Thyroid gland (tissue), 4 donors: ENCODE measurements at regions of chr10 and their contacts with region 1.

Region 1: GRCh38 chr10:116287906-116288501 is 15.0 kb upstream of the GFRA1 start:
- DNase-seq: peak; percentile 34 to 46
- H3K4me3 ChIP-seq: no peak overlapping the region
- H3K27ac ChIP-seq: no peak overlapping the region
- H3K4me1 ChIP-seq: no peaks in the 10 kb centered on the region
- H3K27me3 ChIP-seq: no peaks in the 10 kb centered on the region
- CTCF ChIP-seq: peak in 5 of 6 experiments; percentile 46 to 85 (median 69)
- POLR2A ChIP-seq: no peak

Region 2: GRCh38 chr10:115706026-115706781 is 581.8 kb before region 1 on chr10:
- intact Hi-C with region 1: loop called (anchors 10 kb)
- DNase-seq: no peak
- H3K4me3 ChIP-seq: no peak overlapping the region
- H3K27ac ChIP-seq: no peak overlapping the region
- H3K4me1 ChIP-seq: no peaks in the 10 kb centered on the region
- H3K27me3 ChIP-seq: no peaks in the 10 kb centered on the region
- CTCF ChIP-seq: peak in 3 of 6 experiments; percentile 40 to 44 (median 42)
- POLR2A ChIP-seq: no peak

Region 3: DNA sequence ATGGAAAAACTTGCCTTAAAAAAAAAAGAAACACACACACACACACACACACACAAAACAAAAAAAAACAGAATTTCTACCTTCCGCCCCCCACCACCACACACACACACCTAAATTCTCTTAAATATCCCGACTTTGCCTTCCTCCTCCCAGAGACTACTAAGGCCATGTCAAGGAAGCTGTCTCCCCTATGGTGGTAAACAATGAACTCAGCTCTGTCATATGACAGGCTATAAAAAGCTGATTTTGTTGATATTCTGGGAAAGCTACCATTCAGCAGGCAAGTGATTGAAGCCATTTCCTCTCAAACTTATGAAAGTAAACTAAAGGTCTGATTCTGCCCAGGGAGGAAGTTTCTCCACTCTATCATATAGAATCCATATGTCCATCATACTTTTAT is 486.0 kb before region 1 on chr10:
- intact Hi-C with region 1: loop called (anchors 5 kb)
- DNase-seq: no peak
- H3K4me3 ChIP-seq: no peak overlapping the region
- H3K27ac ChIP-seq: no peak overlapping the region
- H3K4me1 ChIP-seq: no peaks in the 10 kb centered on the region
- H3K27me3 ChIP-seq: no peaks in the 10 kb centered on the region
- CTCF ChIP-seq: no peak
- POLR2A ChIP-seq: no peak

Region 4: GRCh38 chr10:116490028-116490662 is 202.1 kb after region 1 on chr10:
- intact Hi-C with region 1: no loop called
- DNase-seq: no peak
- H3K4me3 ChIP-seq: no peak overlapping the region
- H3K27ac ChIP-seq: no peak overlapping the region
- H3K4me1 ChIP-seq: no peaks in the 10 kb centered on the region
- H3K27me3 ChIP-seq: no peaks in the 10 kb centered on the region
- CTCF ChIP-seq: peak in 4 of 6 experiments; percentile 21 to 59 (median 40)
- POLR2A ChIP-seq: no peak